ENCODE measurements at regions of chr17 and their contacts with region 1.

Region 1: DNA sequence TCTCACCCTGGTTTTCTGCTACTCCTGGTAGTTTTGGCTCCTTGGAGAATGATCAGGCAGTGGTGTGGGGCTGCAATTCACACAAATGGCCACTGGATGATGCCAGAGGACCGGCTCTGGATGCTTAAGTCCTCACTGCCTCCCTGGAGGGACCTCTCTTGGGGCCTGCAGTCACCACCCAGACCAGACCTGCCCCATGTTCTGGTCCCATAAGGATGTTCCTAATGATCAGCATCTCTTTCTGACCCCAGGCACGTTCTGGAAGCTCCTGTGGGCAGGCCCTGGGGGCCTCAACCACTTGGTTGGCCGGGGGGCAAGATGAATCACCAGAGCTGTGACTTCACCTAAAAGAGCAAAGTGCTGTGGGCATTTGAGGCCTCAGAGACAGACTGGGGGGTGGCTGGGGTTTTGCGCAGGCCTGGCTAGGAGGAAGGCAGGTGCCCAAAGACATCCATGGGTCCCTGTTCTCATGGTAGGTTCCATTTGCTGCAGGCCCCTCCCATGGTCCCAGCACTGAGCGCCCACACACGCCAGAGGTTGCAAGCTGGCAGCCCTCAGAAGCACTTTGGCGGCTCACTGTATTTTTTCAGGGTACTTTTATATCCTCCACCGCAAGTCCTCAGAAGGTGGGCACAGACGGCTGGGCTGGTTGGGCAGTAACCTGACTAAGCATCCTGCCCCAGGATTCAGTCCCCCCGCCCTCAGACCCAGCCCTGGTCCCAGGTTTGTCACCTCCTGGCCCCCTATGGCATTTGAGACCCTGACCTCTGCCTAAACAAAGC is 53.2 kb downstream of the NT5M start:
- DNase-seq: peak; percentile 79 to 84
- ATAC-seq: peak; percentile 86
- H3K4me3 ChIP-seq: no peak overlapping the region
- H3K27ac ChIP-seq: no peak overlapping the region
- H3K4me1 ChIP-seq: no peaks in the 10 kb centered on the region
- H3K27me3 ChIP-seq: no peaks in the 10 kb centered on the region

Region 2: DNA sequence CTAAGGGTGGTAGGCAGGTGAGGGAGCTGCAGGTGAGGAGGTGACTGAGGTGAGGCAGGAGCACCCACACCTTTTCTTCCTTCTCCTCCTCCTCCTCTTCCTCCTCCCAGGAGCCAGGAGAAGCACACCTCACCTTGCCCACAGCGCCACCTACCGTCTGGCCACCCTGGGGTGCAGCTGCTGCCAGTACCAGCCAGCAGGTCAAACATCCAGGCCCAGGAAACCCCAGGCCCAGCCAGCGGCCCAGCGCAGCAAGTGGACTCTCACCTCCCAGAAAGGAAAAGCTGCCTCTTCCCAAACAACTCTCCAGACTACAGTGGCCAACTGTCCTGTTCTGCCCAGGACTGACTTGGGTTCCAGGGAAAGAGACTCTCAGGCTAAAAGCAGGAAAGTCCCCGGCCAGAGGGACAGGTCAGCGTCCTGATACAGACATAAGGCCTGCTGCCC is 212.4 kb after region 1 on chr17:
- intact Hi-C with region 1: loop called (anchors 2 to 5 kb)
- DNase-seq: peak; percentile 71 to 87
- ATAC-seq: no peak
- H3K4me3 ChIP-seq: no peak overlapping the region
- H3K27ac ChIP-seq: no peak overlapping the region
- H3K4me1 ChIP-seq: no peaks in the 10 kb centered on the region
- H3K27me3 ChIP-seq: no peaks in the 10 kb centered on the region

Region 3: GRCh38 chr17:17641621-17642409 is 285.5 kb after region 1 on chr17:
- intact Hi-C with region 1: loop called (anchors 2 kb)
- DNase-seq: peak; percentile 81 to 90
- ATAC-seq: peak; percentile 83
- H3K4me3 ChIP-seq: no peak overlapping the region
- H3K27ac ChIP-seq: no peak overlapping the region
- H3K4me1 ChIP-seq: no peaks in the 10 kb centered on the region
- H3K27me3 ChIP-seq: no peaks in the 10 kb centered on the region

Measured in aorta (tissue), 5 donors.